BJ (cell line): ENCODE measurements at regions of chr20 and their contacts with region 1.

Region 1: DNA sequence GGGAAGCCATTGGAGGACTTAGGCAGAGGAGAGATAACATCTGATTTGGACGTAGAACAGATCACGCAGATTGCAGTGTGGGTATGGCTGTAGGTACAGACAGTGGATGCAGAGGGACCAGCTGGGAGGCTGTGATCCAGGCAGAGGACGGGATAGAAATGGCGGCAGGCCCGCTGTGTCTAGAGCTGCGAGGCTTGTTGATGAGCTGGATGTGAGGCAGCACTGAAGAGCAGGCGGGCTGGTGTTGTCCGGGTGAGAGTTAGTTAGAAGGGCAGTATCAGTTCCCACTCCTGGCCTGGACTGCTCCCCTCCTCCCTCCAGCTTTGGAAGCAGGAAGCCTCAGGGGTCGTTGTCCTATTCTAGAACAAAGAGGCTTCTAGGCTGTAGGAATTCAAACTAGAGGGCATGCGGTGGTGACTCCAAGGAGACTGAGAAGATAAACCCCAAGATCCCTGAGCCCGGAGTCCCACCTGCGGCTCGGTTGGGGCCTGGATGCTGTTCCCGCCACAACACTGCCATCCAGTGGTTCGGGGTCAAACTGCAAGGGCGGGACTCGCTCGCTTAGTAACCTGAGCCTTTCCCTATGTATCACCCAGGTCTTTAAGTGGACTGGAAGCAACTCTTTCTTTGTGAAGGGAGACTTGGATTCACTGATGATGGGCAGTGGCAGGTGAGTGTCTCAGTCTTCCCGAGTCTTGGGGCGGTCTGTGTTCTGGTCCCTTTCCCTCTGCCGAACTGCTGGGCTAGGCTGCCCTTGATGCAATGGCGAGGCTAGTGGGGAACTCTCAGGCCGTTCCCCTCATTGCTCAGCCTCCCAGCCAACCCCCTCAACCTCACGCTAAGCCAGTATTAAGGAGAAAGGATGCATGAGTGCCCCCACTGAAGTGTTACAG is 11.2 kb downstream of the TLDC2 start:
- DNase-seq: peak; percentile 22
- H3K4me3 ChIP-seq: peak overlapping the region; percentile 18; the same call in 1 of the 2 replicates
- H3K27me3 ChIP-seq: 0 out of 2 replicates have a peak, but pooled peaks cover 1% of the 10 kb centered on the region
- CTCF ChIP-seq: peak; percentile 98

Region 2: GRCh38 chr20:36613974-36614373 is 273.1 kb before region 1 on chr20:
- CTCF ChIA-PET with region 1: interaction called, 14 read pairs
- POLR2A ChIA-PET with region 1: no interaction called
- DNase-seq: no peak
- H3K4me3 ChIP-seq: no peak overlapping the region
- H3K27me3 ChIP-seq: no peaks in the 10 kb centered on the region
- CTCF ChIP-seq: no peak

Region 3: GRCh38 chr20:36969051-36969450 is 81.9 kb after region 1 on chr20:
- CTCF ChIA-PET with region 1: no interaction called
- POLR2A ChIA-PET with region 1: no interaction called
- DNase-seq: no peak
- H3K4me3 ChIP-seq: no peak overlapping the region
- H3K27me3 ChIP-seq: no peaks in the 10 kb centered on the region
- CTCF ChIP-seq: no peak